Activated CD4-positive, alpha-beta T cell treated with anti-CD3 and anti-CD28 coated beads, Interleukin-2, amount 10 ng/mL, durations not matched to agents 24 days and 14 days (primary cell): ENCODE measurements at regions of chr19 and their contacts with region 1.

Region 1: DNA sequence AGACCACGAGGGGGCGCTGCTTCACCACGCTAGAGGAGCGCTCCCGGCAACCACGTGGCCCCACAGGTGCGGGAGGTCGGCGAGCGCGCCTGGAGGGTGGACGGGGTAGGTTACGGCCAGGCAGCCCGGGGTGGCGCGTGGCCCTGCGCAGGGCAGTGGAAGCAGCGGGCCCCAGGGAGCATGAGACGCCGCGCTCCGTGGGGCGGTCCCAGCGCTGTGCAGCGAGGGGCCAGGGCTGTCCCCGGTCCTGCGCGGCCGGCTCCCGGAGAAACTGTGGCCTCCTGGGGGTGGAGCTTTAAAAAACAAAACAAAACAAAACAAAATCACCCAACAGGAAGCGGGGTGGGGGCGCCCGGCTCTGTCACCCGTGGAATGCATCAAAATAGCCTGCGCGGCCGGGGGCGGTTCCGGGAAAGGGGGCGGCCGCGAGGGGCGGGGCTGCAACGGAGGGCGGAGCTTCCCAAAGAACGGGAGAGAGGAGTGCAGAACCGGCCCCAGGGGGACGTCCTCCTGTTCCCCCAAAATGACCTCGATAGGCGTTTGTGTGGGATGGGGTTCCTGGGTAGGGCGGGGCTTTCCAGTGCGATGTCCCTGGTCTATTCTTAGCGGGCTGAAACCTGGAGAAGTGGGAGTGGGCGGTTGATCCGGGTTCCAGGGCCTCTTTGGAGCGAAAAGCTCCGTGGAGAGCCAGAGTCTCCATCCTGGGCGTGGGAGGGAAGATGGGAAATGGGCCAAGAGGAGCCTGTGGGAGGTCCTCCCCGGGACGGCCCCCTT is 27.3 kb downstream of the NUMBL start:
- DNase-seq: peak; percentile 98
- H3K4me3 Mint-ChIP-seq: peak overlapping the region; percentile 74
- H3K27ac Mint-ChIP-seq: peak overlapping the region; percentile 77
- H3K4me1 Mint-ChIP-seq: peaks cover 15% of the 10 kb centered on the region
- H3K27me3 Mint-ChIP-seq: peaks cover 4% of the 10 kb centered on the region

Region 2: GRCh38 chr19:40690693-40691420 is 27.7 kb after region 1 on chr19:
- intact Hi-C with region 1: loop called (anchors 1 kb)
- DNase-seq: peak; percentile 95
- H3K4me3 Mint-ChIP-seq: peak overlapping the region; percentile 91
- H3K27ac Mint-ChIP-seq: peak overlapping the region; percentile 94
- H3K4me1 Mint-ChIP-seq: peaks cover 4% of the 10 kb centered on the region
- H3K27me3 Mint-ChIP-seq: no peaks in the 10 kb centered on the region

Region 3: GRCh38 chr19:40750059-40750873 is 87.2 kb after region 1 on chr19 and contains the start of gene ACTMAP:
- intact Hi-C with region 1: loop called (anchors 10 kb)
- DNase-seq: peak; percentile 100
- H3K4me3 Mint-ChIP-seq: peak within 1 kb of the TSS; percentile 92
- H3K27ac Mint-ChIP-seq: peak within 1 kb of the TSS; percentile 100
- H3K4me1 Mint-ChIP-seq: peaks cover 37% of the 10 kb centered on the region
- H3K27me3 Mint-ChIP-seq: no peaks in the 10 kb centered on the region
- total RNA-seq, gene ACTMAP: 8.6 and 9.4 TPM in 2 replicates

Region 4: DNA sequence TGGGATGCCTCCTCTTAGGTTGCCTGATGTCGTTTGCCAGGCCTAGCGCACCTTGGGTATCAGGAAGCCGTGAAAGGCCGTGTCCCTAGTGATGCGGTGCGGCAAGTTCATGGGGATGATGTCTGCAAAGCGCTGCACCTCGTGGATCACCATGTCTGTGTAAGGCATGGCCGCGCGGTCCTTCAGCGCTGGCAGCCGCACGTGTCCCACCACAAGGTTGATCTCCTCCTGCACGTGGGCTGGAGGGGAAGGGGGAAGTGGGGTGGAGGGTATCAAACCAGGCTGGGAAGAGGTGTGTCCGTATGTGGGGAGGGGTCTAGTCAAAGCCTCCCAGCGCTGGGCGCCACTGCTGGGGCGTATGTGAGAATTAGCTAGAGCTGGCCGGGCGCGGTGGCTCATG is 159.1 kb after region 1 on chr19:
- intact Hi-C with region 1: loop called (anchors 1 kb)
- DNase-seq: no peak
- H3K4me3 Mint-ChIP-seq: no peak overlapping the region
- H3K27ac Mint-ChIP-seq: no peak overlapping the region
- H3K4me1 Mint-ChIP-seq: peaks cover 31% of the 10 kb centered on the region
- H3K27me3 Mint-ChIP-seq: peaks cover 2% of the 10 kb centered on the region